ENCODE measurements at regions of chr15 and their contacts with region 1.

Region 1: DNA sequence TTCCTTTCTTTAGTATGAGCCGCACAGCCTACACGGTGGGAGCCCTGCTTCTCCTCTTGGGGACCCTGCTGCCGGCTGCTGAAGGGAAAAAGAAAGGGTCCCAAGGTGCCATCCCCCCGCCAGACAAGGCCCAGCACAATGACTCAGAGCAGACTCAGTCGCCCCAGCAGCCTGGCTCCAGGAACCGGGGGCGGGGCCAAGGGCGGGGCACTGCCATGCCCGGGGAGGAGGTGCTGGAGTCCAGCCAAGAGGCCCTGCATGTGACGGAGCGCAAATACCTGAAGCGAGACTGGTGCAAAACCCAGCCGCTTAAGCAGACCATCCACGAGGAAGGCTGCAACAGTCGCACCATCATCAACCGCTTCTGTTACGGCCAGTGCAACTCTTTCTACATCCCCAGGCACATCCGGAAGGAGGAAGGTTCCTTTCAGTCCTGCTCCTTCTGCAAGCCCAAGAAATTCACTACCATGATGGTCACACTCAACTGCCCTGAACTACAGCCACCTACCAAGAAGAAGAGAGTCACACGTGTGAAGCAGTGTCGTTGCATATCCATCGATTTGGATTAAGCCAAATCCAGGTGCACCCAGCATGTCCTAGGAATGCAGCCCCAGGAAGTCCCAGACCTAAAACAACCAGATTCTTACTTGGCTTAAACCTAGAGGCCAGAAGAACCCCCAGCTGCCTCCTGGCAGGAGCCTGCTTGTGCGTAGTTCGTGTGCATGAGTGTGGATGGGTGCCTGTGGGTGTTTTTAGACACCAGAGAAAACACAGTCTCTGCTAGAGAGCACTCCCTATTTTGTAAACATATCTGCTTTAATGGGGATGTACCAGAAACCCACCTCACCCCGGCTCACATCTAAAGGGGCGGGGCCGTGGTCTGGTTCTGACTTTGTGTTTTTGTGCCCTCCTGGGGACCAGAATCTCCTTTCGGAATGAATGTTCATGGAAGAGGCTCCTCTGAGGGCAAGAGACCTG is 13.2 kb downstream of the GREM1 start:
- DNase-seq: peak; percentile 89

Region 2: DNA sequence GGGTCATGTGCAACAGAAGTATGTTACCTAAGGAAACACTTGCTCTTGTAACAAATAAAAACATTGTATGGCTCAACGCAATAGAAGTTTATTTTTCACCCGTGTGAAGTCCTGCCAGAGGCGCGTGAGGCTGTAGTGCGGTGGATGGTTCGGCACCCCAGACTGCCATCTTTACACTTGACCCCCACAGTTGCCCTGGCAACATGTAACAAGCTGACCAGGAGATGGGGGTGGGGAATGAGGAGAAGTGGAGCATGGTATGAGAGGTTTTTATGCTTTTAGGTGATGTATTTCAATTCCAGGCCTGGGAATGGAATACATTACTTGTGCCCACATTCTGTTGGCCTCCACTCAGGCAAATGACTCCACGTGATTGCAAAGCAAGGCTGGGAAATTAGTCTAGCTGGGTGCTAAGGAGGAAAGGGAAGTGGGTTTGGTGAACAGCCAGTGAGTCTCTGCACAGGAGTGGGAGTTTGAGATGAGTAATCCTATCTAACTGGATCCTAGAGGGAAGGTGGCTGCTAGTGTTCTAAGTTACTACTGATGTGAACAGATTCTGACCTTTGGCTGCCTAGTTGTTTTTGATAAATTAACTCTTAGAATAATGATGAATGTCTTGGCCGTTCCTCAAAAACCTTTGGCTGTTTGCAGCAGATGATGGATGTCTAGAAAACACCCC is 46.9 kb before region 1 on chr15:
- in situ Hi-C with region 1: loop called (anchors 10 kb)
- DNase-seq: peak; percentile 85

Region 3: DNA sequence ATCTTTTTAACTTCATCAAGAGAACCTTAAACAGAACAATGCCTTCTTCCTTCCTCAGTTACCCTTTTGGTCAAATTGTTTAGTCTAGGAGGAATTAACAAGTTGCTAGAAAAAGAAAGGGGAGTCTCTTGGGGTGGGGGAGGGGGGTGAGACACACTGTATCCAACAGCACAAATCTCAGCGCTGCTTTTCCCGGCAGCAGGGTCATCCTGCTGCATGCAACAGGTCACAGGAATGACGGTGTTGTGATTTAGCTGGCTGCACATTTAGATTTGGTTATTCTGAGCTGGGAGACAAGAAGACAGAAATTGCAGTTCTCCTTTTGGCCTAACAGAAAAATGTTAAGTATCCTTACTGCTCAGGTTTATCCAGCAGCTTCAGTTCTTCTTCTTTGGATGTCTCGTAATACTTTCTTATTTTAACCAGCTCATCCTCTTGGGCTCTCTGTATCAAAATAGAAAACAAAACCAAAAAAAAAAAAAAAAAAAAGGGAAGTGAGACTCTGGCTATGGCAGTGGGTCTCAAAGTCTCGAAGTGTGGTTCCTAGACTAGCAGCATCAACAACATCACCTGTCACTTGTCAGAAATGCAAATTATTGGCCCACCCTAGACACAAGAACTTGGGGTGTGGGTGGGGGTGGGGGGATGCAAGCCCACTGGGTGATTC is 177.3 kb after region 1 on chr15:
- in situ Hi-C with region 1: no loop called
- DNase-seq: no peak

Region 4: DNA sequence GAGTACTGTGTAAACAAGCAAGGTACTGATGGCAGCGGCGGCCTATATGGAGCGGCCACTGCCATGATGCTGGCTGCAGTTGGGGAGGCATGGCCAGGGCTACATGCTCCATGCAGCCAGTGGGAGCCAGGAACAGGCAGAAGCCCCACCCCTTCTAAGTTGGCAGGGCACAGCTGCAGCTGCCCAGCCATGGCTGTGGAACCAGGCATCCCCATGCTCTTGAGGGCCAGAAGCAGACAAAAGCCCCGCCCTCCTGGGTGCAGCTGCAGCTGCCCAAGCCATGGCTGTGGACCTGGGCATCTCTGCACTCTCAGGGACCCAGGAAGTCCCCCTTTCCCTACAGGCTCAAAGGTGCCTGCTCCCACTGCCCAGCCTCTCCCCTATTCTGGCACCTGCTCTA is 312.7 kb after region 1 on chr15:
- in situ Hi-C with region 1: no loop called
- DNase-seq: no peak